Naive thymus-derived CD4-positive, alpha-beta T cell (primary cell): ENCODE measurements at regions of chr4 and their contacts with region 1.

Region 1: DNA sequence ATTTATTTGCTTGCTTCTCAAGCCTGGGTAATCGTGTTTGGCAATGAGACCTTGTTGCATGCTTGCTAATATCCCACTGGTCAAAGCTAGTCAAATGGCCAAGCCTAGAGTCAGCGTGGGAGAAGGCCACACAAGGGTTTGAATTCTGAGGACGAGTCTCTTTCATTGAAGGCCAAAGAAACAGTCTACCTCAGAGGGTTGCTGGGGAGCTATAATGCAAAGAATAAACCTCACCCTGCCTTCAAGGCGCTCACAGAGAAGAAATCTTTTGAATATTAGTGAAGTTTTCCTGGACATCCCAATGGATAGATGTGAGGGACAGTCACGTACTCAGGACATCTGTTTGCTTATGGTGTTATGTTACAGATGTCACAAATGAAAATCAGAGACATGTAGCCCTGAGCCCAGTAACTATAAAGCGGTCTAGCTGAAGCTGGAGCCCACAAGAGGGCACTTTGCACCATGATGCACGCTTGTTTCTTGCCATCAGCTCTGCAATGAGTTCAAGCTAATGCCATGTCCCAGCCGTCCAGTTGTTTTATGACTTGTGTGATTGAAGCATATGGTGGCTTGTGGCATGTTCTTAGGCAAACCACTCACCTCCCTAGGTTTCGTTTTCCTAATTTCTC is 1.1 kb upstream of the TLR3 start:
- DNase-seq: peak in 5 of 9 donors; percentile 14 to 41 (median 16)
- ATAC-seq: peak; percentile 77
- H3K4me3 ChIP-seq: peak overlapping the region; percentile 63
- H3K4me3 Mint-ChIP-seq: peak overlapping the region; percentile 31 to 88 (median 79)
- H3K27ac ChIP-seq: no peak overlapping the region
- H3K27ac Mint-ChIP-seq: peak overlapping the region in 2 of 9 donors; percentile 49 to 80
- H3K4me1 ChIP-seq: peaks cover 0 to 3% of the 10 kb centered on the region in 2 donors
- H3K4me1 Mint-ChIP-seq: peaks cover 0 to 28% (median 25%) of the 10 kb centered on the region in 7 donors
- H3K27me3 ChIP-seq: no peaks in the 10 kb centered on the region
- H3K27me3 Mint-ChIP-seq: peaks cover 0 to 18% (median 14%) of the 10 kb centered on the region in 5 donors

Region 2: DNA sequence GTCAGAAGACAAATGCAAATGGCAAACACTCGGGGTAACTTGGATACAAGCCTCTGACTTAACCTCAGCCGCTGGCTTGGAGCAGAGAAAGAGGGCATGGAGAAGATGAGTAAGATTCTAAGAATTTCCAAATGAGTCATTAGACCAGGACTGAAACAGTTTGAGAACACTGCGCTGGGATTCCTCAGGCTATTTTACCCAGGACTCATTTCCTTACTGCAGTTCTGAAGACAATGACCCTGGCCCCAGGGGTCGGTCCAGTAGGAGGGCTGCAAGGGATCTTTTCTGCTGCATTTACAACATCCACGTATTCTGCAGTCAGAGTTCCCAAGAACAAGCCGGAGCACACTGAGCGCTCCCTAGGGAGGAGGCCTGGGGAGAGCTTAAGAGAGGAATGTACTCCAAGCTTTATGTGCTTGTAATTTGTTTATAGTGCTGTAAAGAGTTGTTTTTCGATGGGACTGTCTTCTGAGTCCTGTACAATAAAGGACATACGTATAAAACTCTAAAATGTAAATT is 228.6 kb before region 1 on chr4:
- CTCF ChIA-PET with region 1: no interaction called
- POLR2A ChIA-PET with region 1: no interaction called
- intact Hi-C with region 1: no loop called
- DNase-seq: no peak
- ATAC-seq: no peak
- H3K4me3 ChIP-seq: no peak overlapping the region
- H3K4me3 Mint-ChIP-seq: no peak overlapping the region
- H3K27ac ChIP-seq: no peak overlapping the region
- H3K27ac Mint-ChIP-seq: no peak overlapping the region
- H3K4me1 ChIP-seq: no peaks in the 10 kb centered on the region
- H3K4me1 Mint-ChIP-seq: no peaks in the 10 kb centered on the region
- H3K27me3 ChIP-seq: no peaks in the 10 kb centered on the region
- H3K27me3 Mint-ChIP-seq: peaks cover 0 to 7% (median 5%) of the 10 kb centered on the region in 5 donors

Region 3: DNA sequence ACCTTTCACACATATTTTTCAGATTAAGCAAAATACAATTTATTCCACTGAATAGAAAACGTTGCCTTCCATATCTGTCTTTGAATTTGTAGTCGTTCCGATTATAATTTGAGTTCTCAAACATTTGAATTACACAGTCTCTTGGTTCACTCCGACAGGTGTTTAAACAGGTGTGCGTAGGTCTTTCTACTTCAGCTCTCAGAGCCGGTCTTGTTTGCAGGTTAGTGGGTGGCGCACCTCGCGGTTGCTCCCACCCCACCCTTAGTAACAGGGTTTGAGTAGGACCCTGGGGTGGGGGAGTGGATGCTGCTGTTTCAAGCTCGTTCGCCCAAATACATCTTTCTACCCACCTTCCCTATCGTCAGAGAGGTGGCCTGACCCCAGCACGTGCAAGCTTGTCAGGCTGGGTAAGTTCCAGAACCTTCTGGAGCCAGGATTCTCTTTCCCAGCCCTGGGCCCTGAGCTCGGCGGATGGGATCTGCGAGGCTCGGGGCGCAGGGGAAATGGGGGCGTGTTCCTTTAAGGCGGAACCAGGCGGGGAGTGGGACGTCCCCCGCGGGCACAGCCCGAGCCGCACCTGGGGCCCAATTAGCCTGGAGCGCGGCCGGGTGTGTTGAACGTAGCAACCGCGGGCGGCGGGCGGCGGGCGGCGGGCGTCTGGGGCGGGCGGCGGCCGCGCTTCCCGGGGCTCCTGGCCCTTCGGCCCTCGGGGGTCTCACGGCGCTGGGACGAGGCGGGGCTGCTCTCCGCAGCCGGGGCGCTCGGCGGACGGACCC is 36.4 kb after region 1 on chr4 and contains the start of gene FAM149A:
- CTCF ChIA-PET with region 1: no interaction called
- POLR2A ChIA-PET with region 1: no interaction called
- intact Hi-C with region 1: loop called in 1 of 2 experiments (anchors 2 kb)
- DNase-seq: peak; percentile 7 to 48 (median 34)
- ATAC-seq: peak; percentile 80
- H3K4me3 ChIP-seq: peak within 1 kb of the TSS; percentile 4
- H3K4me3 Mint-ChIP-seq: peak within 1 kb of the TSS; percentile 70 to 93 (median 88)
- H3K27ac ChIP-seq: peak within 1 kb of the TSS; percentile 25
- H3K27ac Mint-ChIP-seq: peak within 1 kb of the TSS in 6 of 9 donors; percentile 24 to 74 (median 62)
- H3K4me1 ChIP-seq: no peaks in the 10 kb centered on the region
- H3K4me1 Mint-ChIP-seq: peaks cover 4 to 14% (median 6%) of the 10 kb centered on the region in 7 donors
- H3K27me3 ChIP-seq: no peaks in the 10 kb centered on the region
- H3K27me3 Mint-ChIP-seq: peaks cover 44 to 60% (median 49%) of the 10 kb centered on the region in 5 donors
- total RNA-seq, gene FAM149A: 1.2 to 2.0 (median 1.5) TPM in 4 of 5 experiments, not detected in the other

Region 4: DNA sequence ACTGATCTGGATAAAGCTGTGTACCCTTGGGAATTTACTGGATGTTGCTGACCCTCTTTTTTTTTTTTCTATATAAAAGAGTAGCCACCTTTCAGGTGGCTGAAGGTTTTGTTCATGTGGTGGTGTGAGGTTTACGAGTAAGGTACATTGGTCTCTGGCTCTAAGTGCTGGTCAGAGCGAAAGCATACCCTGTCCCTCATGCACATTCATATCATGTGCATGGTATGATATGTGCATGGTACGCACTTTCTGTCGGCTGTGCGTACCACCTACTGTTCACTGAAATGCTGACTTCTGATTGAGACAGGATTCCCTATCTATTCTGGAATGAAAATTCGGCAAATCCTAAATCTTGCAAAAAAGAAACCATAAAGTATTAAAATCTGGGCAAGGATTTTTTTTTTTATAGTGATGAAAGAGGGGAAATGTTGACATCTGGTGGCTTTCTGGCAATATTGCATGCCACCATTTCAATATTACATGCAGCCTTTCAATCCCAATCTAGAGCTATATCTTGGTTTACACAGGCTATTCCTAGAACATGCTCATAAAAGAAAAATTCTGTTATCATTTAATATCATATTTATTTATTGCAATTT is 69.4 kb after region 1 on chr4:
- CTCF ChIA-PET with region 1: interaction called, 4 read pairs
- POLR2A ChIA-PET with region 1: no interaction called
- intact Hi-C with region 1: loop called (anchors 1 to 2 kb)
- DNase-seq: no peak
- ATAC-seq: no peak
- H3K4me3 ChIP-seq: no peak overlapping the region
- H3K4me3 Mint-ChIP-seq: no peak overlapping the region
- H3K27ac ChIP-seq: no peak overlapping the region
- H3K27ac Mint-ChIP-seq: no peak overlapping the region
- H3K4me1 ChIP-seq: no peaks in the 10 kb centered on the region
- H3K4me1 Mint-ChIP-seq: peaks cover 0 to 17% (median 0%) of the 10 kb centered on the region in 7 donors
- H3K27me3 ChIP-seq: no peaks in the 10 kb centered on the region
- H3K27me3 Mint-ChIP-seq: peaks cover 0 to 21% (median 2%) of the 10 kb centered on the region in 5 donors

Region 5: GRCh38 chr4:186191200-186192065 is 123.6 kb after region 1 on chr4 and contains the start of gene CYP4V2:
- CTCF ChIA-PET with region 1: interaction called, 3 read pairs
- POLR2A ChIA-PET with region 1: no interaction called
- intact Hi-C with region 1: loop called (anchors 1 to 5 kb)
- DNase-seq: peak; percentile 68 to 94 (median 90)
- ATAC-seq: peak; percentile 90
- H3K4me3 ChIP-seq: peak within 1 kb of the TSS; percentile 91
- H3K4me3 Mint-ChIP-seq: peak within 1 kb of the TSS; percentile 89 to 97 (median 94)
- H3K27ac ChIP-seq: peak within 1 kb of the TSS; percentile 95
- H3K27ac Mint-ChIP-seq: peak within 1 kb of the TSS; percentile 94 to 99 (median 98)
- H3K4me1 ChIP-seq: peaks cover 12 to 19% of the 10 kb centered on the region in 2 donors
- H3K4me1 Mint-ChIP-seq: peaks cover 34 to 62% (median 56%) of the 10 kb centered on the region in 7 donors
- H3K27me3 ChIP-seq: no peaks in the 10 kb centered on the region
- H3K27me3 Mint-ChIP-seq: no peaks in the 10 kb centered on the region
- total RNA-seq, gene CYP4V2: 19.7 to 41.4 (median 26.0) TPM

Region 6: GRCh38 chr4:186272699-186273391 is 205.0 kb after region 1 on chr4:
- CTCF ChIA-PET with region 1: no interaction called
- POLR2A ChIA-PET with region 1: no interaction called
- intact Hi-C with region 1: no loop called
- DNase-seq: no peak
- ATAC-seq: no peak
- H3K4me3 ChIP-seq: no peak overlapping the region
- H3K4me3 Mint-ChIP-seq: no peak overlapping the region
- H3K27ac ChIP-seq: no peak overlapping the region
- H3K27ac Mint-ChIP-seq: no peak overlapping the region
- H3K4me1 ChIP-seq: no peaks in the 10 kb centered on the region
- H3K4me1 Mint-ChIP-seq: no peaks in the 10 kb centered on the region
- H3K27me3 ChIP-seq: no peaks in the 10 kb centered on the region
- H3K27me3 Mint-ChIP-seq: peaks cover 2 to 21% (median 15%) of the 10 kb centered on the region in 5 donors